Left ventricle myocardium superior (tissue), 1 donor: ENCODE measurements at regions of chr12 and their contacts with region 1.

Region 1: DNA sequence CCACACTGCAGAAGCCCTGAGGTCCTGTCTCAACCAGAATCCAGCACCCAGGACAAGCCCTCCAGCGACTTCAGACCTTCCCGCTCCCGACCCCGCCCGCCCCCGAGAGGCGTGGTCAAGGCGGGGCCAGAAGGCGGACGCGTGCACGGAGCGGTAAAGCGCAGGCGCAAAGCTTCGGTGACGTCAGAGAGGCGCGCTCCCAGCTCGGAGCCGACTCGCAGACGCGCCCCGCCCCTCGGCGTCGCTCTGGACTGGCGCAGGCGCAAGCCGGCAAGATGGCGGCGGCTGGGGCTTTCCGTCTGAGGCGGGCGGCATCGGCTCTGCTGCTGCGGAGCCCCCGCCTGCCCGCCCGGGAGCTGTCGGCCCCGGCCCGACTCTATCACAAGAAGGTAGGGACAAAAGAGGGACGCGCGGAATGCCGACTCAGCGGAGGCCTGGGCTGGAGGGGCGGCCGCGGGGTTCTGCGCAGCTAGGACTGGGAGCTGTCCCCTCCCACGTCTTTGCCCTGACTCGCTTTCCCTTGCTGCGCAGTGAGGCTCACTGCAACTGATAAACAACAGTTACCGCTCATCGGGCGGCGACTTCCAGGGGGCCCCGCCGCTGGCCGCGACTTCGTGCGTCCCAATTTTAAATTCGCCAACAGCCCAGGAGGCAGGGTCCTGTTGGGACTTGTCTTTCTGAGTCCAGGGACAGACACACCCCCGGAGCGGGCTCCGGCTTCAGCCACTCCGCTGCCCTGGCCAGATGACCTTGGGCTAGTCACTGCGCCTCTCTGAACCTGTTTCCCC is at the start of gene ISCU:
- DNase-seq: peak; percentile 99
- ATAC-seq: peak; percentile 87
- total RNA-seq, gene ISCU: 468 TPM

Region 2: DNA sequence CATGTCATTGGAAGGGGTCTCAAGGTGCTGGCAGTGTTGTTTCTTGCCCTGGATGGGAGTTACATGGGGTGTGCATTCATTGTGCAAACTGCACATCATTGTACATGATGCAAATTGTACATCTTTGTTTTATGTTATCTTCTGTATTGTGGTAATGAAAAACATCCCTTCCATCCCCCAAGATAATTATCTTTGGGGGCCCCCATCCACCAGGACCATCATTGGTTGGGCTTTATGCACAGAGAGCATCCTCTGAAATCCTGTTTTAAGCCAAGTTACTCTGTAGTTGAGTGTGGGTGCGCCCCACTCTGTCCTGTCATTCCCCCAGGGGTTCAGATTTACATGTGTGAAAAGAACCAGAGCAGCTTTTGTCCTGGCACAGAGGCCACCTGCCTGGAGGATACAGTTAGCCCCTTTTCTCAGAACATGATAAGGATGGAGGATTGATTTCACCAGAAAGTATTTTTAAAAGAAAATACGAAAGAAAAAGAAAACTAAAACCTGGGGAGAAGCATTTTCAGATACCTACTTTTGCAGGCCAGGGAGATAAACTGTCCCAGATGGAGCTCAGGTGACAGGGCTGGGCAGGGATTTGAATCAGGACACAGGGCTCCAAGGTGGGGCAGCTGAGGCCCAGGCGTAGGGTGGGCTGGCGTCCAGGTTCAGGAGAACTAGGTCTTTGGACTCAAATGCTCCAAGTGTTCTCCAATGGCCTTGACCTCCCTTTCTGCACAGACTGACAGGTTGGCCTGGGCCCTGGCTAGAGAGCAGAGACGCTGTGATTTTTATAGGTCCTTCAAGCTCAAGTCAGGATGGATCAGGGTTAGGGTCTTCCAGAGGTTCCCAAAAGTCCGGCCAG is 416.3 kb before region 1 on chr12:
- intact Hi-C with region 1: no loop called
- DNase-seq: no peak
- ATAC-seq: no peak

Region 3: DNA sequence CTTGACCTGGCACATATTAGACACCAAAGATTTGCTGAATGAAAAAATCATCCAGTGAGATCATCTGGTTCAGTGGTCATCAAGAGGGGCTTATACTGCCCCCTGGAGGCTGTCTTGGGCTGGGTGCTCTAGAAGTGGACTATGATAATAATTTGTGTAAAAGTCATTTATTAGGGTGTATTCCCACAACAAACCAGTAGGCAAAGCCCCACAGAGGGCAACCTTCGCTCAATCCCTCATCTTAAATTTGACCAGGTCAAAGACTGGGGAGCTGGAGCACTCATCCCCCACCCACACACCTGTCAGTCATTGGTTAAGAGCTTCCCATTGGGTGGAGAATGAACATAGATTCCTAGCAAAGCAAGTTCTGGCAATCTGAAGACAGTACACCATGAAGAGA is 67.5 kb before region 1 on chr12:
- intact Hi-C with region 1: no loop called
- DNase-seq: no peak
- ATAC-seq: no peak

Region 4: GRCh38 chr12:108618079-108618952 is 55.8 kb after region 1 on chr12:
- intact Hi-C with region 1: loop called (anchors 5 kb)
- DNase-seq: peak; percentile 89
- ATAC-seq: peak; percentile 90

Region 5: GRCh38 chr12:108950991-108951739 is 388.6 kb after region 1 on chr12:
- intact Hi-C with region 1: loop called (anchors 10 kb)
- DNase-seq: peak; percentile 77
- ATAC-seq: peak; percentile 67